Activated naive CD8-positive, alpha-beta T cell treated with anti-CD3 and anti-CD28 coated beads, Interleukin-2, amount 10 ng/mL, durations not matched to agents 7 days and 5 days (primary cell): ENCODE measurements at regions of chr22 and their contacts with region 1.

Region 1: DNA sequence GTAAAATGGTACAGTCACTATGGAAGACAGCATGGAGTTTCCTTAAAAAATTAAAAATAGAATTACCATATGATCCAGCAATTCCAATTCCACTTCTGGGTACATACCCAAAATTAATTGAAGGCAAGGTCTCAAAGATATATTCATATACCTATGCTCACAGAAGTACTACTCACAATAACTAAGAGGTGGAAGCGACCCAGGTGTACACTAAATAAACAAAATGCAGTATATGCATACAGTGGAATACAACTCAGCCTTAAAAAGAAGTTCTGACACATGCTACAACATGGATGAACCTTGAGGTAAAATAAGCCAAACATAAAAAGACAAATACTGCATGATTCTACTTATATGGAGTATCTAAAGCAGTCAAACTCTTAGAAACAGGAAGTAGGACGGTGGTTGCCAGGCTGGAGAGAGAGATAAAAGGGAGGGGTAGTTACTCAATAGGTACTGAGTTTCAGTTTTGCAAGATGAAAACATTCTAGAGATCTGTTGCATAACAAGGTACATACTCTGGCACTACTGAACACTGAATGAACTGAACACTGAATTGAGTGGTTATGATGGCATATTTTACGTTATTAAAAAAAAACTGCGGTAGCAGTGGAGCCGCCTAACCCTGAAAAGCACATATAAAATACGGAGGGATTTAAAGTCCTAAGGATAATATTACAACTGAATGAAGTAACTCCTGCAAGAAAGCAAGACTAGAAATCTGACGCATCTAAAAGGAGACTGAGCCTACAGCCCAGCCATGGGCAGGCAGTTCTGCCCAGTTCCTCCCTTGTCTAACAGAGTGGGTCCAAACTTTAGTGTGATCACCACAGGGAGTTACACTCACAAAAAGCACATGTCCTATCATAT is 12.8 kb downstream of the DGCR2 start:
- DNase-seq: no peak
- ATAC-seq: peak; percentile 88
- H3K4me3 Mint-ChIP-seq: peak overlapping the region; percentile 83
- H3K27ac Mint-ChIP-seq: peak overlapping the region; percentile 92
- H3K4me1 Mint-ChIP-seq: peaks cover 48% of the 10 kb centered on the region
- H3K27me3 Mint-ChIP-seq: no peaks in the 10 kb centered on the region

Region 2: GRCh38 chr22:19122143-19122751 is 12.8 kb after region 1 on chr22 and contains the start of gene DGCR2:
- POLR2A ChIA-PET with region 1: interaction called, 27 read pairs
- DNase-seq: peak; percentile 97
- ATAC-seq: peak; percentile 92
- H3K4me3 Mint-ChIP-seq: peak within 1 kb of the TSS; percentile 92
- H3K27ac Mint-ChIP-seq: peak within 1 kb of the TSS; percentile 85
- H3K4me1 Mint-ChIP-seq: peaks cover 34% of the 10 kb centered on the region
- H3K27me3 Mint-ChIP-seq: no peaks in the 10 kb centered on the region
- total RNA-seq, gene DGCR2: 38.0 to 38.3 TPM